Activated CD4-positive, alpha-beta memory T cell treated with anti-CD3 and anti-CD28 coated beads, Interleukin-2, amount 10 ng/mL, durations not matched to agents 7 days and 5 days (primary cell): ENCODE measurements at regions of chr22 and their contacts with region 1.

Region 1: DNA sequence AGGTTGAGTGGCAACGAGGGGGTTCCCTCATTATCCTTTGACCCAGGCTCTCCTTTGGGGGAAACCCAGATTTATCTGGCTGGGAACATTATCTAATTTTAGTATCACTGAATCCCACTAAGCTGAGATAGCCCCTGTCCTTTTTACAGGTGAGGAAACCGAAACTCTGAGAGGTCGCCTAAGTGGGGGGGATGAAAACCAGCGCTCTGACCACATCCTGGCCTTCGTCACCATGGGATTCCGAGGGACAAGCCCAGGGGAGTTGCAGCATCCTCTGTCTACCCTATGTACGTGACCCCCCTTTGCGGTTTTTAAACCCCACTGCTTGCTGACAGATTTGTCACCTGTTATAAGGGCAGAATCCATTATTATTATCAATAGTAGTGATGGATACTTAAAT is 61.0 kb downstream of the ISX start:
- DNase-seq: no peak
- H3K4me3 Mint-ChIP-seq: no peak overlapping the region
- H3K27ac Mint-ChIP-seq: no peak overlapping the region
- H3K4me1 Mint-ChIP-seq: peaks cover 2% of the 10 kb centered on the region
- H3K27me3 Mint-ChIP-seq: peaks cover 11% of the 10 kb centered on the region

Region 2: GRCh38 chr22:35150183-35151107 is 23.5 kb after region 1 on chr22:
- CTCF ChIA-PET with region 1: interaction called, 16 read pairs
- POLR2A ChIA-PET with region 1: no interaction called
- DNase-seq: peak; percentile 65
- H3K4me3 Mint-ChIP-seq: no peak overlapping the region
- H3K27ac Mint-ChIP-seq: no peak overlapping the region
- H3K4me1 Mint-ChIP-seq: no peaks in the 10 kb centered on the region
- H3K27me3 Mint-ChIP-seq: peaks cover 2% of the 10 kb centered on the region

Region 3: GRCh38 chr22:35219012-35219411 is 92.0 kb after region 1 on chr22:
- CTCF ChIA-PET with region 1: no interaction called
- POLR2A ChIA-PET with region 1: no interaction called
- DNase-seq: no peak
- H3K4me3 Mint-ChIP-seq: no peak overlapping the region
- H3K27ac Mint-ChIP-seq: no peak overlapping the region
- H3K4me1 Mint-ChIP-seq: no peaks in the 10 kb centered on the region
- H3K27me3 Mint-ChIP-seq: peaks cover 6% of the 10 kb centered on the region